ENCODE measurements at regions of chr12 and their contacts with region 1.

Region 1: GRCh38 chr12:127306604-127307215 is 960.3 kb upstream of the TMEM132C start:
- DNase-seq: no peak
- H3K4me3 ChIP-seq: no peak overlapping the region
- CTCF ChIP-seq: no peak
- POLR2A ChIP-seq: no peak

Region 2: GRCh38 chr12:126960709-126961108 is 346.0 kb before region 1 on chr12:
- intact Hi-C with region 1: loop called (anchors 5 kb)
- DNase-seq: no peak
- H3K4me3 ChIP-seq: no peak overlapping the region
- CTCF ChIP-seq: no peak
- POLR2A ChIP-seq: no peak

Region 3: DNA sequence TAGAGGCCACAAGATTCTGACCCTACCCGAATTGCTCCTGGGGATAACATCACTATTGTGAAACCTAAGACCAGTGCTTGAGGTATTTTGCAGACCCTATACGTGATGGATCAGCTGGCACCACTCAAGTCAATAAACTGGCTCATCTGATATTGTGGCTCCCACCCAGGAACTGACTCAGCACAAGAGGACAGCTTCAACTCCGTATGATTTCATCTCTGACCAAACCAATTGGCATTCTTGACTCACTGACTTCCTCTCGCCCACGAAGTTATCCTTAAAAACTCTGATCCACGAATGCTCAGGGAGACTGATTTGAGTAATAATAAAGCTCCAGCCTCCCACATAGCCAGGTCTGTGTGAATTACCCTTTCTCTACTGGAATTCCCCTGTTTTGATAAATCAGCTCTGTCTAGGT is 75.9 kb before region 1 on chr12:
- intact Hi-C with region 1: no loop called
- DNase-seq: no peak
- H3K4me3 ChIP-seq: no peak overlapping the region
- CTCF ChIP-seq: no peak
- POLR2A ChIP-seq: no peak

Measured in lower leg skin (tissue), 4 donors.